Transverse colon (tissue), 4 donors: ENCODE measurements at regions of chr20 and their contacts with region 1.

Region 1: GRCh38 chr20:57596998-57597939 is 23.0 kb downstream of the ZBP1 start:
- DNase-seq: peak; percentile 79
- H3K4me3 ChIP-seq: peak overlapping the region in 1 of 4 donors; percentile 27
- H3K27ac ChIP-seq: no peak overlapping the region
- H3K4me1 ChIP-seq: peaks cover 5 to 28% (median 26%) of the 10 kb centered on the region in 4 donors
- H3K27me3 ChIP-seq: no peaks in the 10 kb centered on the region
- CTCF ChIP-seq: peak; percentile 93 to 99 (median 97)
- EP300 ChIP-seq: no peak
- POLR2A ChIP-seq: no peak

Region 2: GRCh38 chr20:57374931-57375651 is 222.2 kb before region 1 on chr20:
- in situ Hi-C with region 1: loop called in 2 of 4 experiments (anchors 25 kb)
- intact Hi-C with region 1: loop called (anchors 10 kb)
- DNase-seq: peak; percentile 28
- H3K4me3 ChIP-seq: peak overlapping the region in 1 of 4 donors; percentile 1
- H3K27ac ChIP-seq: peak overlapping the region in 3 of 4 donors; percentile 12 to 36 (median 12)
- H3K4me1 ChIP-seq: peaks cover 0 to 3% (median 0%) of the 10 kb centered on the region in 4 donors
- H3K27me3 ChIP-seq: no peaks in the 10 kb centered on the region
- CTCF ChIP-seq: no peak
- EP300 ChIP-seq: no peak
- POLR2A ChIP-seq: no peak

Region 3: GRCh38 chr20:57391074-57391554 is 206.2 kb before region 1 on chr20 and contains the start of gene RBM38:
- in situ Hi-C with region 1: loop called in 2 of 4 experiments (anchors 25 kb)
- intact Hi-C with region 1: no loop called
- DNase-seq: peak; percentile 79
- H3K4me3 ChIP-seq: peak within 1 kb of the TSS; percentile 82 to 88 (median 87)
- H3K27ac ChIP-seq: peak within 1 kb of the TSS; percentile 92 to 95 (median 93)
- H3K4me1 ChIP-seq: peaks cover 23 to 66% (median 43%) of the 10 kb centered on the region in 4 donors
- H3K27me3 ChIP-seq: no peaks in the 10 kb centered on the region
- CTCF ChIP-seq: no peak
- EP300 ChIP-seq: no peak
- POLR2A ChIP-seq: no peak
- total RNA-seq, gene RBM38: 26.5 to 37.4 (median 30.4) TPM

Region 4: GRCh38 chr20:57514273-57514751 is 83.0 kb before region 1 on chr20:
- in situ Hi-C with region 1: loop called (anchors 5 kb)
- intact Hi-C with region 1: loop called (anchors 2 kb)
- DNase-seq: peak; percentile 79
- H3K4me3 ChIP-seq: no peak overlapping the region
- H3K27ac ChIP-seq: no peak overlapping the region
- H3K4me1 ChIP-seq: peaks cover 0 to 17% (median 0%) of the 10 kb centered on the region in 4 donors
- H3K27me3 ChIP-seq: no peaks in the 10 kb centered on the region
- CTCF ChIP-seq: peak; percentile 73 to 95 (median 75)
- EP300 ChIP-seq: no peak
- POLR2A ChIP-seq: no peak

Region 5: GRCh38 chr20:57682184-57683101 is 85.2 kb after region 1 on chr20:
- in situ Hi-C with region 1: no loop called
- intact Hi-C with region 1: no loop called
- DNase-seq: peak; percentile 58
- H3K4me3 ChIP-seq: no peak overlapping the region
- H3K27ac ChIP-seq: peak overlapping the region; percentile 24 to 72 (median 55)
- H3K4me1 ChIP-seq: peaks cover 10 to 47% (median 23%) of the 10 kb centered on the region in 4 donors
- H3K27me3 ChIP-seq: no peaks in the 10 kb centered on the region
- CTCF ChIP-seq: no peak
- EP300 ChIP-seq: no peak
- POLR2A ChIP-seq: no peak

Region 6: GRCh38 chr20:58202044-58202443 is 604.8 kb after region 1 on chr20:
- in situ Hi-C with region 1: loop called in 3 of 4 experiments (anchors 5 to 10 kb)
- intact Hi-C with region 1: no loop called
- DNase-seq: no peak
- H3K4me3 ChIP-seq: no peak overlapping the region
- H3K27ac ChIP-seq: no peak overlapping the region
- H3K4me1 ChIP-seq: no peaks in the 10 kb centered on the region
- H3K27me3 ChIP-seq: no peaks in the 10 kb centered on the region
- CTCF ChIP-seq: no peak
- EP300 ChIP-seq: no peak
- POLR2A ChIP-seq: no peak

Region 7: DNA sequence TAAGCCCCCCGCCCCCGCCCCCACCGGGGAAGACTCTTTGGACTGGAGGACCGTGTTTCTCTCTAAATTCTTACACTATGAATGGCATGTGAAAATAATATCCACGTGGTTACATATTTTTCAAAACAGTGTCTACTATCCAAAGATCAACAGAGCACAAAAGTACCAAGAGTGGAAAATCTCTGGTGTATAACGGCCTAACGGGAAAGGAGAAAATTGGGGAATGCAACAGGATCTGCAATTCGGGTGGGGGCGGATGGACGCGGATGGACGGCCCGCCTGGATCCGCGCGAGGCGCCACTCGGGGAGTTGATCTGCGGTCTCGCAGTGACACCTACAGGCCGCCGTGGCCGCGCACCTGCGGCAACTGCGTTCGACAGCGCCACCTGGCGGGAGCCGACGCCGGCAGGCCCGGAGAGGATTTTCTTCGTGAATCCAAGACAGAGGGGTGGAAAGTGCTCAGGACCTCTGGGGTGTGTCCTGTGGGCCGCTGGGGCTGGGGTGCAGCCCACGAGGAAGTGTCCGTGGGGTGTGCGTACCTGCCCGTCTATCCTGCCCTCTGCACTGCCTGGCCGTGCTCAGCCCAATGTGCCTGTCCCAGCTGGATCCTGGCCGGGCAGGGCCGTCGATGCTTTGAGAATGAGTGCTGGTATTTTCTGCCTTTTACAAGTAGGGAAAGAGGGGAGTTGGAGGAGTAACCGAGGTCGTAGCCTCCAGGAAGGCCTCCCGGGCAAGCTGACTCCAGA is 612.6 kb after region 1 on chr20:
- in situ Hi-C with region 1: loop called in 3 of 4 experiments (anchors 5 to 10 kb)
- intact Hi-C with region 1: loop called (anchors 2 kb)
- DNase-seq: peak; percentile 85
- H3K4me3 ChIP-seq: no peak overlapping the region
- H3K27ac ChIP-seq: no peak overlapping the region
- H3K4me1 ChIP-seq: peaks cover 0 to 8% (median 0%) of the 10 kb centered on the region in 4 donors
- H3K27me3 ChIP-seq: peaks cover 34% of the 10 kb centered on the region
- CTCF ChIP-seq: peak; percentile 100
- EP300 ChIP-seq: no peak
- POLR2A ChIP-seq: no peak